HepG2 (cell line): ENCODE measurements at regions of chr6 and their contacts with region 1.

Region 1: DNA sequence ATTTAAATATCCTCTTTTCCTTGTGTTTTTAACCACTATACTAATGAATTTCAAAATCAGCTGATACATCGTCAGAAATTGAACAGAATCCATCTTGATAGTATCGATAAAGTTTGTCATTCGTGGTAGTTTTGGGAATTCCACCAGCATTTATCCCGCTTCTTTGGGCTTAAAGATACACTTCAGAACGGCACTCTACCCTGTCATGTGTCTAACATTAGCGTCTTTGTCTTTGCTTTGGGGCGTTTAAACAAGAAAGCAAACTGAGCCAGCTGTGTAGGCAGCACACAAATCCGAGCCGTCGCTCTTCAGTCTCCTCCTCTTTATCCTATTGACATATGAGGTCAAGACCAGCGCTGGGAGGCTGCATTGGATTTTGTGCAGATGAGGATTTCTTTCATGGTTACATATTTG is 27.5 kb upstream of the NHSL1 start:
- DNase-seq: peak; percentile 93
- ATAC-seq: peak; percentile 95
- H3K4me3 ChIP-seq: peak overlapping the region; percentile 9 to 32 (median 30); a peak in 3 of 6 replicates
- H3K27ac ChIP-seq: peak overlapping the region; percentile 67
- H3K4me1 ChIP-seq: peaks cover 63% of the 10 kb centered on the region
- H3K27me3 ChIP-seq: no peaks in the 10 kb centered on the region
- CTCF ChIP-seq: 0 out of 2 replicates have a peak, but pooled peaks have one; percentile 9
- EP300 ChIP-seq: peak in 1 of 2 experiments; percentile 69; a peak in 2 of 4 replicates
- POLR2A ChIP-seq: no peak
- RAD21 ChIP-seq: no peak

Region 2: GRCh38 chr6:138485005-138485545 is 41.8 kb before region 1 on chr6:
- CTCF ChIA-PET with region 1: no interaction called
- POLR2A ChIA-PET with region 1: no interaction called
- in situ Hi-C with region 1: no loop called
- intact Hi-C with region 1: no loop called
- DNase-seq: no peak
- ATAC-seq: no peak
- H3K4me3 ChIP-seq: no peak overlapping the region
- H3K27ac ChIP-seq: no peak overlapping the region
- H3K4me1 ChIP-seq: peaks cover 52% of the 10 kb centered on the region
- H3K27me3 ChIP-seq: no peaks in the 10 kb centered on the region
- CTCF ChIP-seq: no peak
- EP300 ChIP-seq: no peak
- POLR2A ChIP-seq: no peak
- RAD21 ChIP-seq: no peak

Region 3: DNA sequence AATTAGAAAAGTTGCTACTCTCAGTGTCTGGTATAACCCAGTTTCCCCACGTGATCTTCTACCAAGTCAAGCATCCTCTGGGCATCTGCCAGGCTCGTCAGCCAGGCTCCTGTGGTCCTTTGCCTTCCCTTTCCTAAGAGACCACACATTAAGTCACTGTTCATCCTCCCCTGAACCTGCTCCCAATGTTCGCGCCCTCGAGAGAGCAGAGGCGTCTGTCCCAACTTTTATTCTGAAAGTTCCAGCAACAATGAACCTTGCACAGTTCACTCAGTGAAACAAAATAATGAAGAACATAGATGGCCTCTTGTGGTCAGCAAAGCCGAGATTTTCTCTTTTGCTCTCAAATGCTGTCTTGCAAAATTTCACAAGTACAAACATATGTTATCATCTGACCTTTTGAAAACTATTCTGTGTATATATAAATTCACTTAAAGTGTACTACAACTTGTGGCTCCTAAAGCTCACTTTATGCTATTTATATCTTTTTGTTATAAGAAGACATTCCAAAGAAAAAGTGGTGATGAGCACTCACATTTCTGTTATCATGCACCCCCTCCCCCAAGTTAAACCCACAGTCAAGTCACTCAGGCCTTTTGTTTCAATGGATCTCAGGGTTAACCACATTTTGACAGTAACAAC is 11.7 kb after region 1 on chr6:
- CTCF ChIA-PET with region 1: no interaction called
- POLR2A ChIA-PET with region 1: interaction called, 11 read pairs
- in situ Hi-C with region 1: no loop called
- intact Hi-C with region 1: loop called (anchors 1 kb)
- DNase-seq: peak; percentile 86
- ATAC-seq: peak; percentile 76
- H3K4me3 ChIP-seq: peak overlapping the region in 2 of 3 experiments; percentile 3 to 6; a peak in 1 of 6 replicates
- H3K27ac ChIP-seq: peak overlapping the region; percentile 90
- H3K4me1 ChIP-seq: peaks cover 98% of the 10 kb centered on the region
- H3K27me3 ChIP-seq: no peaks in the 10 kb centered on the region
- CTCF ChIP-seq: peak; percentile 38
- EP300 ChIP-seq: peak in 1 of 2 experiments; percentile 91; a peak in 1 of 4 replicates
- POLR2A ChIP-seq: no peak
- RAD21 ChIP-seq: peak; percentile 19; the same call in 1 of the 2 replicates

Region 4: DNA sequence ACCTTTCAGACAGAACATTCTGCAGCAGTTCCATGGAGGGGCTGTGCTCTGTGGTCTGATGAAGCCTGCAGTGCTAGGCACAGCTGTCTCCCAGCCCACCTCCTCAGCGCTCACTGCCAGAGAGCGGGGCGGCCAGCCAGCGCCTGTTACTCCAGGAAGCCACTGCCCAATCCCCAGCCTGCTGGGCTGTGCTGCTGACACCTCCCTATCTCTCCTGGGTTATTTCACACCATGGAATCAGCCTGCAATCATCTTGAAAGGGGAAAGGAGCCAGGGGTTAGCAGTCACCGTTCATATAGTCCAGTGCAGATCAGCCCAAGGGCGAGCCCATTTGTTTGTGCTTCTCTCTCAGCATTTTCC is 18.8 kb after region 1 on chr6:
- CTCF ChIA-PET with region 1: no interaction called
- POLR2A ChIA-PET with region 1: interaction called, 11 read pairs
- in situ Hi-C with region 1: no loop called
- intact Hi-C with region 1: no loop called
- DNase-seq: no peak
- ATAC-seq: peak; percentile 38
- H3K4me3 ChIP-seq: peak overlapping the region; percentile 3 to 45 (median 37); a peak in 3 of 6 replicates
- H3K27ac ChIP-seq: peak overlapping the region; percentile 90
- H3K4me1 ChIP-seq: peaks cover 100% of the 10 kb centered on the region
- H3K27me3 ChIP-seq: no peaks in the 10 kb centered on the region
- CTCF ChIP-seq: no peak
- EP300 ChIP-seq: no peak
- POLR2A ChIP-seq: no peak
- RAD21 ChIP-seq: no peak